ENCODE measurements at regions of chr12 and their contacts with region 1.

Region 1: GRCh38 chr12:127690161-127690560 is 576.8 kb upstream of the TMEM132C start:
- DNase-seq: no peak
- ATAC-seq: no peak
- H3K4me3 ChIP-seq: no peak overlapping the region
- H3K27ac ChIP-seq: no peak overlapping the region
- H3K4me1 ChIP-seq: no peaks in the 10 kb centered on the region
- H3K27me3 ChIP-seq: no peaks in the 10 kb centered on the region

Region 2: GRCh38 chr12:127108360-127109215 is 581.6 kb before region 1 on chr12:
- intact Hi-C with region 1: no loop called
- DNase-seq: peak in 1 of 2 donors; percentile 61
- ATAC-seq: peak; percentile 67
- H3K4me3 ChIP-seq: no peak overlapping the region
- H3K27ac ChIP-seq: no peak overlapping the region
- H3K4me1 ChIP-seq: no peaks in the 10 kb centered on the region
- H3K27me3 ChIP-seq: no peaks in the 10 kb centered on the region

Region 3: GRCh38 chr12:127628645-127629044 is 61.5 kb before region 1 on chr12:
- intact Hi-C with region 1: no loop called
- DNase-seq: no peak
- ATAC-seq: peak; percentile 29
- H3K4me3 ChIP-seq: no peak overlapping the region
- H3K27ac ChIP-seq: no peak overlapping the region
- H3K4me1 ChIP-seq: no peaks in the 10 kb centered on the region
- H3K27me3 ChIP-seq: no peaks in the 10 kb centered on the region

Region 4: GRCh38 chr12:128069359-128069997 is 379.3 kb after region 1 on chr12:
- intact Hi-C with region 1: loop called in 1 of 2 experiments (anchors 5 kb)
- DNase-seq: no peak
- ATAC-seq: no peak
- H3K4me3 ChIP-seq: no peak overlapping the region
- H3K27ac ChIP-seq: no peak overlapping the region
- H3K4me1 ChIP-seq: no peaks in the 10 kb centered on the region
- H3K27me3 ChIP-seq: no peaks in the 10 kb centered on the region